Activated CD4-positive, alpha-beta memory T cell treated with anti-CD3 and anti-CD28 coated beads, Interleukin-2, amount 10 ng/mL, durations not matched to agents 7 days and 5 days (primary cell): ENCODE measurements at regions of chr19 and their contacts with region 1.

Region 1: GRCh38 chr19:16088351-16089009 is 12.2 kb downstream of the TPM4 start:
- DNase-seq: no peak
- H3K4me3 Mint-ChIP-seq: no peak overlapping the region
- H3K27ac Mint-ChIP-seq: peak overlapping the region; percentile 40
- H3K4me1 Mint-ChIP-seq: peaks cover 73% of the 10 kb centered on the region
- H3K27me3 Mint-ChIP-seq: no peaks in the 10 kb centered on the region

Region 2: GRCh38 chr19:15962319-15962718 is 126.2 kb before region 1 on chr19:
- CTCF ChIA-PET with region 1: no interaction called
- POLR2A ChIA-PET with region 1: no interaction called
- DNase-seq: peak; percentile 18
- H3K4me3 Mint-ChIP-seq: no peak overlapping the region
- H3K27ac Mint-ChIP-seq: no peak overlapping the region
- H3K4me1 Mint-ChIP-seq: no peaks in the 10 kb centered on the region
- H3K27me3 Mint-ChIP-seq: peaks cover 3% of the 10 kb centered on the region

Region 3: GRCh38 chr19:16062789-16063188 is 25.7 kb before region 1 on chr19:
- CTCF ChIA-PET with region 1: interaction called, 19 read pairs
- POLR2A ChIA-PET with region 1: interaction called, 12 read pairs
- DNase-seq: peak; percentile 75
- H3K4me3 Mint-ChIP-seq: no peak overlapping the region
- H3K27ac Mint-ChIP-seq: no peak overlapping the region
- H3K4me1 Mint-ChIP-seq: peaks cover 25% of the 10 kb centered on the region
- H3K27me3 Mint-ChIP-seq: peaks cover 4% of the 10 kb centered on the region

Region 4: DNA sequence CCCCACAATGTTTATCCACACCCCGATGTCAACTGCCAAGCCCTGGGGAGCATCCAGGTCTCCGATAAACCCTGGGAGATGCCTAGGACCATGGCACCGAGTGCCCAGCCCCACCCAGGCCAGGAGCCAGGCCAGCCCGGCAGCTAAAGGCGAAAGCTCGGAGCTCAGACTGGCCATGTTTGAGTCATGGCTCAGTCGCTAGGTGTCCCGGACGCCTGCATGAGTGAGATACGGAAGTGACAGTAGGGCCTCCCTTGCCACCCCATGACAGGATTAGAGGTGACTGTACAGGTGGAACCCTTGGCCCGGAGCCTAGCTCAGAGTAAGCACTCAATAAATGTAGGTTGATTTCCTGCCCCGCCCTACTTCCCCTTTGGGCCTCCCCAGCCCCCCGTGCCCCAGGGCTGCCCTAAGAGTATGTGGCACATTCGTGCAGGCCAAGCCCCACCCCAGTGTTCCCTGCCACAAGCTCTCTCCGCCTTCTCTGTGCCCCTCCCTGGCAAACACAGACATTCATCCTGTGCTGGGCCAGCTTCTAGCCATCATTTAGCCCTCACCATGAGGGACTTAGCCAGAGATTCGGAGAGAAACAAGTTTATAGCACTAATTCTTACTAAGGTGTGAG is 18.0 kb before region 1 on chr19:
- CTCF ChIA-PET with region 1: interaction called, 26 read pairs
- POLR2A ChIA-PET with region 1: interaction called, 322 read pairs
- DNase-seq: peak; percentile 90
- H3K4me3 Mint-ChIP-seq: no peak overlapping the region
- H3K27ac Mint-ChIP-seq: no peak overlapping the region
- H3K4me1 Mint-ChIP-seq: peaks cover 53% of the 10 kb centered on the region
- H3K27me3 Mint-ChIP-seq: no peaks in the 10 kb centered on the region

Region 5: DNA sequence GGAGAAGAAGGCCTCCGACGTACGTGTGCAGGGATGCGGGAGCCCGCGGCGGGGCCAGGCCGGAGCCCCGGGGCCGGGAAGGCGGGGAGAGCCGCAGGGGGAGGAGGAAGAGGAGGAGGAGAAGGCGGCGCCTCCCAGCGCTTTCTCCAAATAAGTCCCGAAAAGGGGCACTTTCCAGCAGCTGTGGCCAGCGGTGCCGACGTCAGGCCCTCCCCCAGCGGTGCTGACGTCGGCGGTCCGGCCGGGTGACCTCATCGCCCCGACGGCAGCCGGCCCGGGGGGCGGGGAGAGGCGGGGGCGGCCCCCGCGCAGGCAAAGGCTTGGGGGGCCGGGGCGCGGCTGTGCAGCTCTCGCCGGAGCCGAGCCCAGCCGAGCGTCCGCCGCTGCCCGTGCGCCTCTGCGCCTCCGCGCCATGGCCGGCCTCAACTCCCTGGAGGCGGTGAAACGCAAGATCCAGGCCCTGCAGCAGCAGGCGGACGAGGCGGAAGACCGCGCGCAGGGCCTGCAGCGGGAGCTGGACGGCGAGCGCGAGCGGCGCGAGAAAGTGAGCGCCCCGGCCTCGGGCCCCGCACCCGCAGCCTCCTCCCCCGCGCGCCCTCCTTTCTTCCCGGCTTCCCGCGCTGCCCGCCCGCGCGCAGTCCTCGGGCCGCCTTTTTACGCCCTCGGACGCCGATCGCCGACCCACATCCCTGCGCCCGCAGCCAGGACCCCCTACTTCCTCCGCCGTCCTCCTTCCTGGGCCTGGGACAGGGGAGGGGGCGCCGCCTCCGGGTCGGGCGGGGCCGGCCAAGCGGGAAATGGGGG is 12.1 kb before region 1 on chr19 and contains the start of gene TPM4:
- CTCF ChIA-PET with region 1: interaction called, 26 read pairs
- POLR2A ChIA-PET with region 1: interaction called, 322 read pairs
- DNase-seq: peak; percentile 94
- H3K4me3 Mint-ChIP-seq: peak within 1 kb of the TSS; percentile 82
- H3K27ac Mint-ChIP-seq: peak within 1 kb of the TSS; percentile 98
- H3K4me1 Mint-ChIP-seq: peaks cover 65% of the 10 kb centered on the region
- H3K27me3 Mint-ChIP-seq: no peaks in the 10 kb centered on the region
- total RNA-seq, gene TPM4: 592 to 611 TPM

Region 6: DNA sequence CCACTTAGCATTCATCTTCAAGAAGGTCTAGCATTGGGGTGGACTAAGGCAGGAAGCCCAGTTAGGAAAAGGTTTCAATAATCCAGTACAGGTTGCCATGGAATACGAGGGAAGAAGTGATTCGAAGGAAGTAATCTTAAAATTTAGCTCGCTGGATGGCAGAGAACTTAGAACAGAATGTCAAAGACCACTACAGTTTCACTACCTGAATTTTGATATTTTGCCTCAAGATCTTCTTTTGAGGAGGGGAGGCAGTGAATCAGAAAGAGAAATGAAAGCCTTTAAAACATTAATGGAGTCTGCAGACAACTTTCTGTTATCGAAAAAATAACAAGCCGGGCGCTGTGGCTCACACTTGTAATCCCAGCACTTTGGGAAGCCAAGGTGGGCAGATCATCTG is 16.2 kb after region 1 on chr19:
- CTCF ChIA-PET with region 1: interaction called, 7 read pairs
- POLR2A ChIA-PET with region 1: interaction called, 105 read pairs
- DNase-seq: no peak
- H3K4me3 Mint-ChIP-seq: no peak overlapping the region
- H3K27ac Mint-ChIP-seq: peak overlapping the region; percentile 35
- H3K4me1 Mint-ChIP-seq: peaks cover 7% of the 10 kb centered on the region
- H3K27me3 Mint-ChIP-seq: no peaks in the 10 kb centered on the region

Region 7: GRCh38 chr19:16111160-16111908 is 22.9 kb after region 1 on chr19 and contains the start of gene RAB8A:
- CTCF ChIA-PET with region 1: interaction called, 15 read pairs
- POLR2A ChIA-PET with region 1: interaction called, 54 read pairs
- DNase-seq: peak; percentile 98
- H3K4me3 Mint-ChIP-seq: peak within 1 kb of the TSS; percentile 99
- H3K27ac Mint-ChIP-seq: peak within 1 kb of the TSS; percentile 96
- H3K4me1 Mint-ChIP-seq: peaks cover 42% of the 10 kb centered on the region
- H3K27me3 Mint-ChIP-seq: no peaks in the 10 kb centered on the region
- total RNA-seq, gene RAB8A: 141 to 147 TPM

Region 8: DNA sequence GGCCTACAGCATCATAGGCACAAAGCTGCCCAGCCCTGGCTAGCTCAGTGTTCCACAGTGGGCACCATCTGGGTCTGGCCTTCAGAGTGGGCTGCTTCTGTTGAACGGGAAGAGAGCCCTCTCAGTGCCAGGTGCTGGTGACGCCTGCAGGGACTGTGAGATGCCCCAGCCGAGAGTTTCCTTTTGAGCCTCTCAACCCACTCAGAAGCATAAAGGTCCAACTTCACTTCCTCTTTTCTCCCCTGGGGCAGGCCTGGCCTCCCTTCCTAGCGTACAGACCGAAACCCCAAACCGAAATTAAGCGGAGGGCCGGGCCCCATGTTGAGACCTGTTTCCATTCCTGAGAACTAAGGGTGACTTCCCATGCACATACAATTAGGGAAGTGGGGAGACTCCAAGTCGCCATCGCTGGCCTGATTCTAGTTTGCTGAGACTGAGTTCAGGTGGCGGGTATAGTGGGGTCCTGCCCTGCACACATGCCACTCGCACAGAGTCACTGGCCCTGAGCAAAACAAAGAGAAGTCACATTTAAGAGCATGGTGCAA is 30.1 kb after region 1 on chr19:
- CTCF ChIA-PET with region 1: interaction called, 3 read pairs
- POLR2A ChIA-PET with region 1: interaction called, 21 read pairs
- DNase-seq: peak; percentile 57
- H3K4me3 Mint-ChIP-seq: peak overlapping the region; percentile 75
- H3K27ac Mint-ChIP-seq: peak overlapping the region; percentile 99
- H3K4me1 Mint-ChIP-seq: peaks cover 77% of the 10 kb centered on the region
- H3K27me3 Mint-ChIP-seq: no peaks in the 10 kb centered on the region